ENCODE measurements at regions of chr10 and their contacts with region 1.

Region 1: DNA sequence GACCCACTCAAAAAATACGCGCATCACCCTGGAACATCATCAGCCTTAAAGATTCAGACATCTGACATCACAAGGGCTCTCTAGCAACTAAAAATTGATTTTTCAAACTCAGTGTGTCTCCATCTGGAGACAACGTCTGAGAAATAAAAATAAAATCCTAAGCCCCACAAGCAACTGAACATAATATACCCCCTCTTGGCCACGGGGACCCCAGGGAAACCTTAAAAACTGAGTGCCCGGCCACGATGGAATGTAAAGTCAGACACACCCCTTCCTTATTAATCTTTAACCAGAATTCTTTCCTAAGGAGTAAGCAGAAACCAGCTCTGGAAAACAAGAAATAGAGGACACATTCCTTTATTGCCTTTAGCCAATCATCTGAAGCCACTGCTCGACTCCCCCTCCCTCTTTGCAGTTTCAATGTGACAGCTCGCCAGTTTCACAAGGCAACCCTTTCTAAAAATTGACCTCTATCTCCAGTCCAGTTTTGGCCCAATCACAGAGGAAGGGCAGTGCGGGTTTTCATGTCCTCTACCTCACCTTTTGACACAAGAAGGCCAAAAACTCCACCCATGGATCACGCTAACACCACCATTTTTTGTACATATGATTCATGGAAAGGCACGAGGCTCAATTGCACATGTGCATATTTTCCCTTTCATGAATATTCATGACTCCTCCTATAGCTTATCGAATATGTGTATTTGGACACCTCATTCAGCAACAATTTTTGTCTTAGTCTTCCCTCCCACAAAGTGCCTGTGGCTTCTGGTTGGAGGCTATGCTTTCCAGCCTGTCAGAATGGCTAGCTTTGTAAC is 24.2 kb downstream of the IFIT3 start:
- DNase-seq: peak; percentile 92 to 96
- H3K4me3 ChIP-seq: no peak overlapping the region
- H3K4me3 Mint-ChIP-seq: peak overlapping the region; percentile 63
- H3K27ac Mint-ChIP-seq: peak overlapping the region; percentile 93
- H3K4me1 ChIP-seq: peaks cover 55% of the 10 kb centered on the region
- H3K4me1 Mint-ChIP-seq: peaks cover 37% of the 10 kb centered on the region
- H3K27me3 ChIP-seq: no peaks in the 10 kb centered on the region
- H3K27me3 Mint-ChIP-seq: no peaks in the 10 kb centered on the region
- CTCF ChIP-seq: no peak

Region 2: GRCh38 chr10:89301721-89302445 is 50.1 kb before region 1 on chr10 and contains the start of gene IFIT2:
- CTCF ChIA-PET with region 1: interaction called, 3 read pairs
- POLR2A ChIA-PET with region 1: interaction called, 4 read pairs
- intact Hi-C with region 1: loop called (anchors 2 kb)
- DNase-seq: peak in 1 of 2 experiments; percentile 23
- H3K4me3 ChIP-seq: peak within 1 kb of the TSS; percentile 25
- H3K4me3 Mint-ChIP-seq: peak within 1 kb of the TSS; percentile 67
- H3K27ac Mint-ChIP-seq: peak within 1 kb of the TSS; percentile 70
- H3K4me1 ChIP-seq: peaks cover 12% of the 10 kb centered on the region
- H3K4me1 Mint-ChIP-seq: no peaks in the 10 kb centered on the region
- H3K27me3 ChIP-seq: no peaks in the 10 kb centered on the region
- H3K27me3 Mint-ChIP-seq: no peaks in the 10 kb centered on the region
- CTCF ChIP-seq: no peak
- total RNA-seq, gene IFIT2: 0.43 and 0.56 TPM in 2 replicates

Region 3: DNA sequence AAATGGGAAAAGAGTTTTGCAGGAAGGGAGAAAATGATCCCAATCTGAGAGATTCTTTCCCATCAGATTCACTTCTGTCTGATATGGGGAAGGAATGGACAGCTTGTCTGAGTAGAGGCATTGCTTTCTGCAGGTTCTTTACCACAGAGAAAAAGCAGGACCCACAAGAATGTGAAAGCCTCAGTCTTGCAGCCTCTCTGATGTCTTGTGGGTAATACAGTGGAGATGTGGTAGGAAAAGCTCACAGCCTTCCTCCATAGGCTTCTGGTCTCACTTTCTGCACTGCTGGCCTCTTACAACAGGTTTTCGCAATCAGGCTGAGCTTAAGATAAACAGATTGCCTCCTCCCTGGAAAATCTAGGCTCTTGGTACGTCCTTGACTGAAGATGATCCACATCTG is 41.0 kb after region 1 on chr10:
- CTCF ChIA-PET with region 1: interaction called, 3 read pairs
- POLR2A ChIA-PET with region 1: no interaction called
- intact Hi-C with region 1: loop called (anchors 1 kb)
- DNase-seq: peak; percentile 38 to 40
- H3K4me3 ChIP-seq: no peak overlapping the region
- H3K4me3 Mint-ChIP-seq: peak overlapping the region; percentile 66
- H3K27ac Mint-ChIP-seq: no peak overlapping the region
- H3K4me1 ChIP-seq: peaks cover 9% of the 10 kb centered on the region; the same call in 1 of the 2 replicates
- H3K4me1 Mint-ChIP-seq: peaks cover 9% of the 10 kb centered on the region
- H3K27me3 ChIP-seq: no peaks in the 10 kb centered on the region
- H3K27me3 Mint-ChIP-seq: no peaks in the 10 kb centered on the region
- CTCF ChIP-seq: no peak

Region 4: GRCh38 chr10:89701238-89702120 is 349.5 kb after region 1 on chr10 and contains the start of gene KIF20B:
- CTCF ChIA-PET with region 1: no interaction called
- POLR2A ChIA-PET with region 1: interaction called, 3 read pairs
- intact Hi-C with region 1: loop called (anchors 5 kb)
- DNase-seq: peak; percentile 97 to 98
- H3K4me3 ChIP-seq: peak within 1 kb of the TSS; percentile 78
- H3K4me3 Mint-ChIP-seq: peak within 1 kb of the TSS; percentile 88
- H3K27ac Mint-ChIP-seq: peak within 1 kb of the TSS; percentile 89
- H3K4me1 ChIP-seq: peaks cover 6% of the 10 kb centered on the region
- H3K4me1 Mint-ChIP-seq: peaks cover 31% of the 10 kb centered on the region
- H3K27me3 ChIP-seq: no peaks in the 10 kb centered on the region
- H3K27me3 Mint-ChIP-seq: no peaks in the 10 kb centered on the region
- CTCF ChIP-seq: peak in 1 of 2 experiments; percentile 63
- total RNA-seq, gene KIF20B: 43.2 and 43.9 TPM in 2 replicates

Region 5: DNA sequence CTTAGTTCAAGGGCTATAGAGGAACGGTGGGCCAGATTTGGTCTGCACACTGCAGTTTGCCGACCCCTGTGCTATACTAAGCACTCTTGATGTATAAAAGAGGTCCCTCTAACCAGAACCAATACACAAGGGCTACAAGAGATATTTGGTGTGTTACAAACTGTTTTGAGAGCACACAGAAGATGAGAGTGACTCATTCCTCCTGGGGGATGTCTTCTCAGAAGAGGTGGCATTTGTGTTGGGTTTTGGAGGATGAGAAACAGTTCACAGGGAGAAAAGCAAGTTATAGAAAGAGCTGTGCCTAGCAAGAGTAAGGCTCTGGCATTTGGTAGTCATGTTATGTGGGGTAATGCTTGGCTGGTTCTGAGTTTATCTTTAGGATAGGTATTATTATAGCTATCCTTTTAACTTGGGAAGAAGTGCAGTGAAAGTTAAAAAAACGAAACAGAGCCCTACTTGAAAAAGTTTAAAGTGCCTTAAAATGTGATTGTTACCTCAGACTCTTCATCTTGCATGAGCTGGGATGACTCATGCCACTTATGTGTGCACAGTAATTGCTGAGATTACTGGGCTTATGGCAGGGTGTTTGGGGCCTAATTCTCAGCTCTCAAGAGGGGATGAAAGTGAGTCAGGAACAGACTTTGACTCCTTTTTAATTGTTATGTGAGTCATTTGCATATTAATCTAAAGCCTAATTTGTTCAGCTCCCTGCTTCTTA is 509.8 kb after region 1 on chr10:
- CTCF ChIA-PET with region 1: no interaction called
- POLR2A ChIA-PET with region 1: no interaction called
- intact Hi-C with region 1: no loop called
- DNase-seq: no peak
- H3K4me3 ChIP-seq: no peak overlapping the region
- H3K4me3 Mint-ChIP-seq: no peak overlapping the region
- H3K27ac Mint-ChIP-seq: peak overlapping the region; percentile 0
- H3K4me1 ChIP-seq: no peaks in the 10 kb centered on the region
- H3K4me1 Mint-ChIP-seq: peaks cover 7% of the 10 kb centered on the region
- H3K27me3 ChIP-seq: no peaks in the 10 kb centered on the region; the same call in 1 of the 2 replicates
- H3K27me3 Mint-ChIP-seq: no peaks in the 10 kb centered on the region
- CTCF ChIP-seq: no peak

Measured in Caco-2 (cell line).